Psoas muscle (tissue), 8 donors: ENCODE measurements at regions of chr9 and their contacts with region 1.

Region 1: DNA sequence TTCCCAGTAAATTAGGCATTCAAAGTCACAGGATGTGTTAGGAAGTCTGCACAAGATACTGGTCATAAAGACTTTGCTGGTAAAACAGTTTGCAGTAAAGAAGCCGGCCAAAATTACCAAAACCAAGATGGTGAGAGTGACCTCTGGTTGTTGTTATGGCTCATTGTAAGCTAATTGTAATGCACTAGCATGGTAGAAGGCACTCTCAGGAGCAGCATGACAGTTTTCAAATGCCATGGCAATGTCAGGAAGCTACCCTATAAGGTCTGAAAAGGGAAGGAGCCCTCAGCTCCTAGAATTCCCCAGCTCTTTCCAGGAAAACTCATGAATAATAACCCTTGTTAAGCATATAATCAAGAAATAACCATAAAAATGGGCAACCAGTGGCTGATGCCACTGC is 64.3 kb upstream of the TNC start:
- DNase-seq: no peak
- ATAC-seq: no peak
- H3K4me3 ChIP-seq: no peak overlapping the region
- H3K27ac ChIP-seq: no peak overlapping the region
- H3K4me1 ChIP-seq: no peaks in the 10 kb centered on the region
- H3K27me3 ChIP-seq: no peaks in the 10 kb centered on the region
- CTCF ChIP-seq: no peak

Region 2: GRCh38 chr9:115127191-115127817 is 55.0 kb before region 1 on chr9:
- intact Hi-C with region 1: loop called in 1 of 2 experiments (anchors 10 kb)
- DNase-seq: no peak
- ATAC-seq: no peak
- H3K4me3 ChIP-seq: no peak overlapping the region
- H3K27ac ChIP-seq: no peak overlapping the region
- H3K4me1 ChIP-seq: no peaks in the 10 kb centered on the region
- H3K27me3 ChIP-seq: no peaks in the 10 kb centered on the region
- CTCF ChIP-seq: no peak